GM10248 (cell line): ENCODE measurements at regions of chr12 and their contacts with region 1.

Region 1: DNA sequence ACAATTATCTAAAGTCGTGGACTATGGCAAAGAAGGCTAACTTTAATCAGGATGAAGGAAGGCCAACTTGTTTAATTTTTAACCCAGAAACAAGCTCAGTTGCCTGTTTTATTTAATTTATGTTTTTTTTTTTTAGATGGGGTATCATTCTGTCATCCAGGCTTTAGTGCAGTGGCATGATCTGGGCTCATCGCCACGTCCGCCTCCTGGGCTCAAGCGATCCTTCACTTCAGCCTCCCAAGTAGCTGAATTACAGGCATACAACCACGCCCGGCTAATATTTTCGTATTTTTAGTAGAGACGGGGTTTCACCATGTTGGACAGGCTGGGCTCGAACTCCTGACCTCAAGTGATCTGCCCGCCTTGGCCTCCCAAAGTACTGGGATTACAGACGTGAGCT is 19.7 kb downstream of the NUDT4 start:
- DNase-seq: no peak
- CTCF ChIP-seq: no peak

Region 2: GRCh38 chr12:92784795-92785562 is 612.4 kb before region 1 on chr12:
- CTCF ChIA-PET with region 1: interaction called, 14 read pairs
- POLR2A ChIA-PET with region 1: no interaction called
- DNase-seq: peak; percentile 50
- CTCF ChIP-seq: peak; percentile 55

Region 3: GRCh38 chr12:93008044-93008778 is 389.2 kb before region 1 on chr12:
- CTCF ChIA-PET with region 1: interaction called, 11 read pairs
- POLR2A ChIA-PET with region 1: no interaction called
- DNase-seq: peak; percentile 53
- CTCF ChIP-seq: no peak

Region 4: GRCh38 chr12:93378373-93379325 is 18.8 kb before region 1 on chr12:
- CTCF ChIA-PET with region 1: interaction called, 51 read pairs
- POLR2A ChIA-PET with region 1: interaction called, 6 read pairs
- DNase-seq: peak; percentile 59
- CTCF ChIP-seq: no peak

Region 5: GRCh38 chr12:93441617-93442410 is 44.4 kb after region 1 on chr12 and contains the start of gene UBE2N:
- CTCF ChIA-PET with region 1: no interaction called
- POLR2A ChIA-PET with region 1: no interaction called
- DNase-seq: peak; percentile 94
- CTCF ChIP-seq: no peak